Heart left ventricle (tissue), 16 donors: ENCODE measurements at regions of chr1 and their contacts with region 1.

Region 1: GRCh38 chr1:91054780-91055481 is 33.1 kb upstream of the ZNF644 start:
- DNase-seq: no peak
- ATAC-seq: no peak
- H3K4me3 ChIP-seq: no peak overlapping the region
- H3K27ac ChIP-seq: no peak overlapping the region
- H3K4me1 ChIP-seq: no peaks in the 10 kb centered on the region
- H3K27me3 ChIP-seq: no peaks in the 10 kb centered on the region
- CTCF ChIP-seq: no peak
- POLR2A ChIP-seq: no peak

Region 2: DNA sequence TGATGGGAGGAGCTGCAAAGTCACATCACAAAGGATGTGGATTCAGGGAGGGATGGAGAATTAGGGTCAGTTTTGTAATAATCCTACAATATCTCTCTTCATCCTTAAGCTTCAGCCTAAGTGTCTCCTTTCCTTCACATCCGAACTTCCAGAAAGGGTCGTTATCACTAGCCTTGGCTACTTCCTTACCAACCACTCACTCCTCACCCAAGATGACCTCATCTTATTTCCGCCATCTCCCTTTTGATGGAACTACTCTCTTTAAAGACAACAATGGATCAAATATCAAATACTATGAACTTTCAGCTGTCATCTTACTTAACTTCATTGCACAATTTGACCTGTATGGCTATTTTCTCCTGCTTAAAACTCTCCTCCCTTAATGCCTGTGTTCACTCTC is 268.2 kb before region 1 on chr1:
- intact Hi-C with region 1: loop called in 1 of 10 experiments (anchors 5 kb)
- DNase-seq: no peak
- ATAC-seq: no peak
- H3K4me3 ChIP-seq: no peak overlapping the region
- H3K27ac ChIP-seq: no peak overlapping the region
- H3K4me1 ChIP-seq: no peaks in the 10 kb centered on the region
- H3K27me3 ChIP-seq: peaks cover 0 to 4% (median 0%) of the 10 kb centered on the region in 9 donors
- CTCF ChIP-seq: no peak
- POLR2A ChIP-seq: no peak

Region 3: DNA sequence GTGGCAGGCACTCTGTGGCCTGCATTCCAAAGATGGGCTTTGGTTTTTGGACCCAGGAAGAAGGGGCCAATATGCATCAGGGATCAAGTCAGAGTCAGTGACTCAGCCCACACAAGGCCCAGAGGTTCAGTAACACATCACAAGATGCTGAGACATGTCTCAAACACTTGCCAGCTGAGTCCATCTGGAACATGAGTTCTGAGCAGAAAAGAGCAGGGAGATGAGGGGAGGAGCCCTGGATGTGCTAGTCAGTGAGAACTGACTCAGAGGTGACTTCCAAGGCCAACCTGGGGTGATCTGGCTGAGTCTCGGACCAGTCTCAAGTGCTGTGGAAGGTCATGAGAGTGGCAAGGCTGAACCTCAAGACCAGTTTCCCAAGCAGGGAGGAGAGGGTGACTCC is 595.8 kb after region 1 on chr1:
- intact Hi-C with region 1: no loop called
- DNase-seq: peak; percentile 61 to 85 (median 73)
- ATAC-seq: peak; percentile 81 to 96 (median 94)
- H3K4me3 ChIP-seq: no peak overlapping the region
- H3K27ac ChIP-seq: peak overlapping the region; percentile 16 to 83 (median 68)
- H3K4me1 ChIP-seq: peaks cover 0 to 25% (median 14%) of the 10 kb centered on the region in 12 donors
- H3K27me3 ChIP-seq: no peaks in the 10 kb centered on the region
- CTCF ChIP-seq: no peak
- POLR2A ChIP-seq: no peak